Activated CD4-positive, alpha-beta T cell treated with anti-CD3 and anti-CD28 coated beads, Interleukin-2, amount 10 ng/mL, durations not matched to agents 24 days and 14 days (primary cell): ENCODE measurements at regions of chr7 and their contacts with region 1.

Region 1: GRCh38 chr7:94620703-94621118 is 35.2 kb downstream of the SGCE start:
- DNase-seq: peak; percentile 77
- H3K4me3 Mint-ChIP-seq: peak overlapping the region; percentile 11
- H3K27ac Mint-ChIP-seq: peak overlapping the region; percentile 38
- H3K4me1 Mint-ChIP-seq: peaks cover 11% of the 10 kb centered on the region
- H3K27me3 Mint-ChIP-seq: peaks cover 8% of the 10 kb centered on the region

Region 2: GRCh38 chr7:94481279-94481678 is 139.4 kb before region 1 on chr7:
- intact Hi-C with region 1: no loop called
- DNase-seq: no peak
- H3K4me3 Mint-ChIP-seq: no peak overlapping the region
- H3K27ac Mint-ChIP-seq: no peak overlapping the region
- H3K4me1 Mint-ChIP-seq: no peaks in the 10 kb centered on the region
- H3K27me3 Mint-ChIP-seq: peaks cover 16% of the 10 kb centered on the region

Region 3: GRCh38 chr7:94605031-94605430 is 15.7 kb before region 1 on chr7:
- intact Hi-C with region 1: no loop called
- DNase-seq: no peak
- H3K4me3 Mint-ChIP-seq: no peak overlapping the region
- H3K27ac Mint-ChIP-seq: no peak overlapping the region
- H3K4me1 Mint-ChIP-seq: no peaks in the 10 kb centered on the region
- H3K27me3 Mint-ChIP-seq: peaks cover 2% of the 10 kb centered on the region

Region 4: GRCh38 chr7:94632338-94633013 is 11.8 kb after region 1 on chr7:
- intact Hi-C with region 1: loop called (anchors 1 kb)
- DNase-seq: no peak
- H3K4me3 Mint-ChIP-seq: no peak overlapping the region
- H3K27ac Mint-ChIP-seq: no peak overlapping the region
- H3K4me1 Mint-ChIP-seq: no peaks in the 10 kb centered on the region
- H3K27me3 Mint-ChIP-seq: peaks cover 5% of the 10 kb centered on the region

Region 5: DNA sequence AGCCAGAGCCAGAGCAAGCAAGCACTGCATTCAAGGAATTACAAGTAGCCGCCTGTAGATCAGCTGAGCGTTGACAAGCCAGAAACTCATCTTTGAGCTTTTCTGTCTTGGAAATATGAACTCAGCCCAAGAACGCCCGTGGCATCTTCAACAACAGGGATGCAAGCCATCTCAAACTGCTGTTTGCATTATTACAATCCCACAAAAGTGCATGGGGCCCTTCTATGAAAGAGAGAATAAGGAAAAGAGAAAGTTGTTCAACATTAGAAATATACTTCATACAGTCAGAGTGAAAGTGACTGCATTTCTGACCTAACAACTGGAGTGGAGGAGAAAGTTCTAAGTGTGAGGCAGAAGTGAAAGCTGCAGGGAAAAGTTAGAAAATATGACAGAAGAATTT is 28.7 kb after region 1 on chr7:
- intact Hi-C with region 1: loop called (anchors 2 kb)
- DNase-seq: no peak
- H3K4me3 Mint-ChIP-seq: no peak overlapping the region
- H3K27ac Mint-ChIP-seq: no peak overlapping the region
- H3K4me1 Mint-ChIP-seq: peaks cover 2% of the 10 kb centered on the region
- H3K27me3 Mint-ChIP-seq: peaks cover 40% of the 10 kb centered on the region

Region 6: GRCh38 chr7:94697035-94697974 is 76.6 kb after region 1 on chr7:
- intact Hi-C with region 1: no loop called
- DNase-seq: no peak
- H3K4me3 Mint-ChIP-seq: no peak overlapping the region
- H3K27ac Mint-ChIP-seq: no peak overlapping the region
- H3K4me1 Mint-ChIP-seq: no peaks in the 10 kb centered on the region
- H3K27me3 Mint-ChIP-seq: no peaks in the 10 kb centered on the region

Region 7: GRCh38 chr7:94779070-94779469 is 158.4 kb after region 1 on chr7:
- intact Hi-C with region 1: no loop called
- DNase-seq: no peak
- H3K4me3 Mint-ChIP-seq: no peak overlapping the region
- H3K27ac Mint-ChIP-seq: no peak overlapping the region
- H3K4me1 Mint-ChIP-seq: no peaks in the 10 kb centered on the region
- H3K27me3 Mint-ChIP-seq: no peaks in the 10 kb centered on the region